A549 (cell line): ENCODE measurements at regions of chr3 and their contacts with region 1.

Region 1: GRCh38 chr3:23888617-23889228 is 28.1 kb downstream of the NKIRAS1 start:
- DNase-seq: peak in 1 of 2 experiments; percentile 47
- ATAC-seq: peak in 1 of 2 experiments; percentile 47; a peak in 2 of 6 replicates
- H3K4me3 ChIP-seq: no peak overlapping the region
- H3K27ac ChIP-seq: no peak overlapping the region
- H3K4me1 ChIP-seq: peaks cover 13% of the 10 kb centered on the region; the same call in 2 of the 3 replicates
- CTCF ChIP-seq: peak; percentile 75
- EP300 ChIP-seq: no peak
- POLR2A ChIP-seq: no peak
- RAD21 ChIP-seq: peak; percentile 75 to 76

Region 2: DNA sequence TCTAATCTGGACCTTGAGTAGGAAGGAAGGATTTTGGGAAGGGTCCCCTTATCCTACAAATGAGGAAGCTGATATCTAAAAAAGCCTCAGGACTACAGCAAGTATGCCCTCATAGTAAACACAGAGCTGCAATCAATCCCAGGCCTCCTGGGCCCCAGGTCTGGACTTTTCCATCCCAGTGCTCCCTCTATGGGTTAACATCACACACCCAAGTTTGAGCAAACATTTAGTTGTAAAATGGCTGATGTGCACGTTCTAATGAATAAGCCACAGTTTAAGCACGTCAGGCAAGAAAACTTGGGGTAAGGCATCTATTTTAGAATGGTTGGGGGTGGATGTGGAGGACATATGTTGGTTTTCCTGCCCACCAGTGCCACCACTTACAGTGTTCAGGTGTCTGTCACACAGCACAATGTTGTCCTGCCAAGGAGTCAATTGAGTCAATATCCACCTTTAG is 127.3 kb before region 1 on chr3:
- CTCF ChIA-PET with region 1: no interaction called
- POLR2A ChIA-PET with region 1: no interaction called
- DNase-seq: peak; percentile 69 to 71
- ATAC-seq: peak; percentile 87 to 96
- H3K4me3 ChIP-seq: no peak overlapping the region
- H3K27ac ChIP-seq: peak overlapping the region; percentile 29 to 33; a peak in 2 of 6 replicates
- H3K4me1 ChIP-seq: no peaks in the 10 kb centered on the region
- CTCF ChIP-seq: peak; percentile 44
- EP300 ChIP-seq: no peak
- POLR2A ChIP-seq: no peak
- RAD21 ChIP-seq: peak; percentile 67 to 77

Region 3: DNA sequence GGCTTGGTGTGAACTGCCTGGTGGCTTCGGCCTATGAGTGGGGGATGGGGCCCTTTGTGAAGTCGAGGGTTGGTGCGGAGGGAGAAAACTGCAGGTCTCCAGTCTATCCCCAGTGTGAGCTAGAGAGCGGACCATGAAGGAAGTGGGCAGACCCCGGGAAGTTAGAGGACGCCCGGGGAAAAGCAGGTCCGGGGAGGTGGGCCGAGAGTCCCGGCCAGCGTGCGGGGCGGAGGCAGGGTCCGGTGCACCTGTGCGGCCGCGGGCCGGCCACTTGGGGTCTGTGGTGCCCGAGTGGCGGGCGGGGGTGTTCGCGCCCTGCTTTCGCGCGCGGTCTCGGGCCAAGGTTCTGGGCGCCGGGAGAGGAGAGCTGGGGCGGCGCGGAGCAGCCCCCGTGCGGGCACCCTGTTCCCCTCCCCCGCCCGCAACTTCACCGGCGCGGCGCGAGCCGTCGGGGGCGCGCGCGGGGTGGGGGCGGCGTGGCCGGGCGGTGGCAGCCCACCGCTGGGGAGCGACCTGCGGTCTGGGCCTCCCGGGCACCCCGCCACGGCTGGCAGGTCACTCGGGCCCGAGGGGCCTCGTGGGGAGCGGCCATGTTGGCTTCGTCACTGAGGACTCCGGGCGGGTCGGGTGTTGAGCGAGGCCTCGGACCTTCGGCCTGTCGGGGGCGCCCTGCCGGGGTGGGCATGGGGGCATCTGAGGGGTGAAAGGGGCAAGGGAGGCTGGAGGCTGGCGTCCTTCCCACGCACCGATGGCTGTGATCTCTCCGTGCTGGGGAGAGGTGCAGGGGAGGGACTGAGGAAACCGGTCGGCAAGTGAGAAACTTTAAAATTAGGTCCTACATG is 78.2 kb before region 1 on chr3:
- CTCF ChIA-PET with region 1: no interaction called
- POLR2A ChIA-PET with region 1: no interaction called
- DNase-seq: peak; percentile 64 to 71
- ATAC-seq: peak; percentile 77 to 78
- H3K4me3 ChIP-seq: peak overlapping the region; percentile 66
- H3K27ac ChIP-seq: peak overlapping the region; percentile 94
- H3K4me1 ChIP-seq: peaks cover 37% of the 10 kb centered on the region
- CTCF ChIP-seq: peak; percentile 49
- EP300 ChIP-seq: no peak
- POLR2A ChIP-seq: peak; percentile 16; the same call in 1 of the 2 replicates
- RAD21 ChIP-seq: 0 out of 5 replicates have a peak, but pooled peaks of 1 of the 2 experiments have one; percentile 8

Region 4: GRCh38 chr3:23859016-23859743 is 29.5 kb before region 1 on chr3:
- CTCF ChIA-PET with region 1: interaction called, 10 read pairs
- POLR2A ChIA-PET with region 1: no interaction called
- DNase-seq: no peak
- ATAC-seq: peak in 1 of 2 experiments; percentile 26; a peak in 1 of 6 replicates
- H3K4me3 ChIP-seq: no peak overlapping the region
- H3K27ac ChIP-seq: no peak overlapping the region
- H3K4me1 ChIP-seq: peaks cover 19% of the 10 kb centered on the region; the same call in 2 of the 3 replicates
- CTCF ChIP-seq: no peak
- EP300 ChIP-seq: no peak
- POLR2A ChIP-seq: no peak
- RAD21 ChIP-seq: no peak

Region 5: GRCh38 chr3:23877329-23877980 is 11.3 kb before region 1 on chr3:
- CTCF ChIA-PET with region 1: interaction called, 31 read pairs
- POLR2A ChIA-PET with region 1: no interaction called
- DNase-seq: peak in 1 of 2 experiments; percentile 57
- ATAC-seq: peak in 1 of 2 experiments; percentile 72; a peak in 3 of 6 replicates
- H3K4me3 ChIP-seq: no peak overlapping the region
- H3K27ac ChIP-seq: peak overlapping the region in 1 of 2 experiments; percentile 28; a peak in 2 of 6 replicates
- H3K4me1 ChIP-seq: peaks cover 44% of the 10 kb centered on the region
- CTCF ChIP-seq: no peak
- EP300 ChIP-seq: no peak
- POLR2A ChIP-seq: no peak
- RAD21 ChIP-seq: no peak

Region 6: DNA sequence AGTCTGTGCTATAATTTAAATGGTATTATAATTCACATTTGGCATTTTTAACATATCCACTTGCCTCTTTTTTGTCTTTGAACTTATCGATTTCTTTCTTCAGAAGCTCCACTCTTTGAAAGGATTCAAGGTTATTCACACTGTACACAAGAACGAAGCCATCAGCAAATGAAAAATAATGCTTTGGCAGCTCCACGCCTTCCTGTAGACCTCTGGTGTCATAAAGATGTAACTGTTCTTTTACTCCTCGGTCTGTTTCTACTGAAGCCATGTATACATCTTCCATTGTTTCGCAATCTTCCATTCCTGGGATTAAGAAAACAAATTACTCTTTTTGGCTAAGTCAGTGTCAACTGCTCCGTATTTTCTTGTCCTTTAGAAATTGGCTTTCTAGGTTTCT is 12.0 kb after region 1 on chr3:
- CTCF ChIA-PET with region 1: interaction called, 26 read pairs
- POLR2A ChIA-PET with region 1: no interaction called
- DNase-seq: peak; percentile 32 to 35
- ATAC-seq: peak; percentile 69 to 78
- H3K4me3 ChIP-seq: no peak overlapping the region
- H3K27ac ChIP-seq: no peak overlapping the region
- H3K4me1 ChIP-seq: no peaks in the 10 kb centered on the region; the same call in 2 of the 3 replicates
- CTCF ChIP-seq: no peak
- EP300 ChIP-seq: no peak
- POLR2A ChIP-seq: no peak
- RAD21 ChIP-seq: peak in 1 of 2 experiments; percentile 7; a peak in 1 of 5 replicates